Dendritic cell treated with granulocyte-macrophage colony-stimulating factor and Interleukin-4, amounts not matched to agents 40 ng/mL and 50 ng/mL, for 4 days (primary cell): ENCODE measurements at regions of chr9 and their contacts with region 1.

Region 1: GRCh38 chr9:1490341-1491232 is 440.4 kb downstream of the DMRT2 start:
- H3K4me3 Mint-ChIP-seq: no peak overlapping the region
- H3K27ac Mint-ChIP-seq: no peak overlapping the region
- H3K4me1 Mint-ChIP-seq: no peaks in the 10 kb centered on the region
- H3K27me3 Mint-ChIP-seq: no peaks in the 10 kb centered on the region

Region 2: DNA sequence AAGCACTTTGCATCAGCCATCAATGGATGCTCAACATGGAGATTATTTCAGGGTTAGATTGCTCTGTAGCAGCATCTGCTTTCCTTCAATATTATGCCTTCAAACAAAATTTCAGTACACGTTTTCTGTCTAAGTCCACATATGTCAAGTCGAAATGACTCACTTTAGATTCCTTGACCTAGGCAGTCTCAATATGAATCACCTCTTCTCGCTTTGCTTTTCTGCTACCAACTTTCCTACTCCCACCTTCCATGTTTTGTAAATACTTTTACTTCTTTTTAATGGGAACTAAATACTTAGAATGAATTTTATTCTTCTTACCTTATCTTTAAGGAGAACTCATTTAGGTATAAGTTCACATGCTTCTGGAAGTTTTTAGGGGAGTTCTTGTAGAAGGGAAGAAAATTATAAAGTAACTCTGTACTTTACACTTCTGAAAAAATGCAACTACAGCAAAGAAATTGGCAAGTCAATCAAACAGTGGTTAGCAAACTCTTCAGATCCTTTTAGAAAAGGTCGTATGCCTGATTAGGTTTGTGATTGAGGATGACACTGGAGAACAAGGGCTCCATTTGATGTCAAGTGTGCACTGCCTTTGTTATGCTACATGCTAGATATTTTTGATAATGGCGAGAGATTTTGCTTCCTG is 46.1 kb after region 1 on chr9:
- intact Hi-C with region 1: loop called (anchors 5 kb)
- H3K4me3 Mint-ChIP-seq: no peak overlapping the region
- H3K27ac Mint-ChIP-seq: no peak overlapping the region
- H3K4me1 Mint-ChIP-seq: no peaks in the 10 kb centered on the region
- H3K27me3 Mint-ChIP-seq: no peaks in the 10 kb centered on the region

Region 3: DNA sequence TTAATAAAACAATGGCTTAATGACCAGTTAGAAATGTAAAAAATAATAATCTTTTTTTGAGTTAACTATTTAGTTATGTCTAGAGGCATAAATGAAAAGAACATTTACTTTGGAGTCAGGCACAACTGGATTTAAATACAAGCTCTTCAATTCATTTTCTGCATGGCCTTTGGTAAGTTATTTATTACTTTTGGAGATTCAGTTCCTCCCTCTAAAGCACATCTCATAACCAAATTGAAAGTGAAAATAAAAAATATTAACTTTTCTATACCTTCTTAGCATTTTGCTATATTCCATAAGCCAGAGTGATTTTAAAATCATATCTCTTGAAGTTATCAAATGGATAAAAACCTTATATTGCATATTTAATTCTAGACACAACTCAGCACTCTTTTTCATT is 89.6 kb after region 1 on chr9:
- intact Hi-C with region 1: no loop called
- H3K4me3 Mint-ChIP-seq: no peak overlapping the region
- H3K27ac Mint-ChIP-seq: no peak overlapping the region
- H3K4me1 Mint-ChIP-seq: no peaks in the 10 kb centered on the region
- H3K27me3 Mint-ChIP-seq: no peaks in the 10 kb centered on the region